Adrenal gland (tissue), 19 donors: ENCODE measurements at regions of chr15 and their contacts with region 1.

Region 1: DNA sequence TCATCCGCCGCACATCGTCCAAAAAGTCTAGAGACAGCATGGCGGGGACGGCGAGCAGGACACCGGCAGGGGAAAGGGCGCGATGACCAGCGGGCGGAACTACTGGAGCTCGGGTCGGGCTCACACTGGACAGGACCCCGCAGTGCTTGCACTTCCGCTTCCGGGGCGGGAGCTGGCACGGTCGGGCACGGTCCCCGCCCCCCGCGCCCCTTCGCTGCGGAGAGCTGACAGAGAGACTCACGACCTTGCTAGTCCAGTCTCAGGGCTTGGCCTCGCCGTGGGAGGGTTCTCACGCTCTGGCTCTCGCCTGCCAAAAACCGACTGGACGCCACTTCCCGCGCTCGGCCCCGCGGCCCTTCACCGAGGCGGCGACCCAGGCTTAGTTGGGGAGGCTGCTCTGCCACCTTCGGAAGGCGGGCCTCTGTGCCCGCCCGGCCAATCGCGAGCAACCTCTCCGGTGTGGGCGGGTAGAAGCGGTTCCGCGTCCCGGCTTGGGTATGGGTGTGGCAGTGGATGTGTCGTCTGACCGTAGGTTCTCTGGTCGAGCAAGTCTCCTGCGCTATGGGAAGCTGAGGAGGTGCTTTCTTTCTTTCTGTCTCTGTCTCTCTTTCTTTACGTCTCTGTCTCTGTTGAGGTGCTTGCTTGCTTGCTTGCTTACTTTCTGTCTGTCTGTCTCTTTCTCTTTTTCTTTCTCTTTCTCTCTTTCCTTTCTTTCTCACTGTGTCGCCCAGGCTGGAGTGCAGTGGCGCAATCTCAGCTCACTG is at the start of gene SEC11A:
- DNase-seq: peak; percentile 94 to 97 (median 96)
- H3K4me3 ChIP-seq: peak within 1 kb of the TSS; percentile 49 to 82 (median 58)
- H3K27ac ChIP-seq: peak within 1 kb of the TSS; percentile 87 to 97 (median 90)
- H3K4me1 ChIP-seq: peaks cover 8 to 31% of the 10 kb centered on the region in 2 donors
- H3K27me3 ChIP-seq: no peaks in the 10 kb centered on the region
- CTCF ChIP-seq: peak in 1 of 6 experiments; percentile 4
- POLR2A ChIP-seq: peak; percentile 72 to 93
- total RNA-seq, gene SEC11A: 130 to 194 (median 168) TPM

Region 2: DNA sequence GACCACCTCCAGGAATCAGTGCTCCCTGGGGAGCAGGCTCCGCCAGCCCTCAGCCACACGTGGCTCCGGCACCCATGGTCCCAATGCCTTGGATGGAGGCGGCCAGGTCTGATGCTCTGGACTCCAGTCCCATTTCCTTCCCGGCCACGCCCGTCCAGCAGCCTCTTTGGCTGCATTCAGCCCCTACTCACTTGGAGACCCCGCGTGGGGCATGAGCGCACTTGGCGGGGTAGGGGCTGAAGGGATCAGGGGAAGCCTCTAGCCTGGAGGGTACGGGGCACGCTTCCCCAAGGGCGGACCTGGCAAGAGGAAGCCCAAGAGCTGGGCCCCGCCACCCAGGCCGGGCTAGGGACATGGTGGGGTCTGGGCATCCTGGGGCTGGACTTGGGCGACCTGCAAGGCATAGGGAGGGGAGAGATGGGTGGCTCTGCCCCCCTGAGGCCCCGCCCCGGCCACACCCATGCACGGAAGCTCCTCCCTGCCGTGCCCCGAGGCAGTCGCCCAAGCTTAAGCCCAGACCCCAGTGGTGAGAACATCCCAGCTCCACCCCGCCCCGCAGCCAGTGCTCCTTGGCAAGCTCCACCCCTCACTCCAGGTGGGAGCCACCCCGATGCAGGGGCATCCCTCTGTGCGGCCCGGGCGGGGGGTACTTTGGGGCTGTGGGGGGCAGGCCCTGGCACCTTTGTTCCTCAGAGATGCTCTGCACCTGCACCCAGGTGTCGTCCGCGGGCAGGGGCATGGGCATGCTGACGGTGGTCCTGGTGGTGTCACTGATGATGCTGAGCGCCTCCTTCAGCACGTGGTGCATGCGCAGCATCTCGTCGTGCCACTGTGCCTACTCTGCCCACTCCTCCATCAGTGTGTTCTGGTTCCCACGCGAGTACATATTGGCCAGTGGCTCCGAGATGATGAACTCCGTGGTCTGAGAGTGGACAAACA is 317.2 kb before region 1 on chr15:
- intact Hi-C with region 1: no loop called
- DNase-seq: peak in 2 of 7 donors; percentile 16 to 42
- H3K4me3 ChIP-seq: no peak overlapping the region
- H3K27ac ChIP-seq: no peak overlapping the region
- H3K4me1 ChIP-seq: no peaks in the 10 kb centered on the region
- H3K27me3 ChIP-seq: no peaks in the 10 kb centered on the region
- CTCF ChIP-seq: no peak
- POLR2A ChIP-seq: no peak

Region 3: GRCh38 chr15:84582583-84583157 is 133.5 kb before region 1 on chr15:
- intact Hi-C with region 1: no loop called
- DNase-seq: no peak
- H3K4me3 ChIP-seq: no peak overlapping the region
- H3K27ac ChIP-seq: no peak overlapping the region
- H3K4me1 ChIP-seq: peaks cover 0 to 10% of the 10 kb centered on the region in 2 donors
- H3K27me3 ChIP-seq: no peaks in the 10 kb centered on the region
- CTCF ChIP-seq: no peak
- POLR2A ChIP-seq: no peak

Region 4: GRCh38 chr15:84658080-84658787 is 58.0 kb before region 1 on chr15 and contains the start of gene NMB:
- intact Hi-C with region 1: loop called (anchors 10 kb)
- DNase-seq: peak; percentile 80 to 86 (median 84)
- H3K4me3 ChIP-seq: peak within 1 kb of the TSS in 3 of 4 donors; percentile 24 to 56 (median 33)
- H3K27ac ChIP-seq: peak within 1 kb of the TSS in 4 of 5 donors; percentile 56 to 85 (median 66)
- H3K4me1 ChIP-seq: peaks cover 9 to 30% of the 10 kb centered on the region in 2 donors
- H3K27me3 ChIP-seq: no peaks in the 10 kb centered on the region
- CTCF ChIP-seq: peak; percentile 49 to 74 (median 57)
- POLR2A ChIP-seq: peak; percentile 11 to 51
- total RNA-seq, gene NMB: 6.9 to 34.1 (median 17.0) TPM